Activated CD4-positive, alpha-beta T cell treated with anti-CD3 and anti-CD28 coated beads for 36 hours (primary cell): ENCODE measurements at regions of chr12 and their contacts with region 1.

Region 1: GRCh38 chr12:24902511-24903328 is 46.2 kb downstream of the BCAT1 start:
- DNase-seq: peak; percentile 63
- ATAC-seq: peak; percentile 28
- H3K4me3 Mint-ChIP-seq: peak overlapping the region; percentile 88
- H3K27ac Mint-ChIP-seq: peak overlapping the region; percentile 95
- H3K4me1 Mint-ChIP-seq: peaks cover 50% of the 10 kb centered on the region
- H3K27me3 Mint-ChIP-seq: peaks cover 28% of the 10 kb centered on the region

Region 2: GRCh38 chr12:24922090-24922489 is 19.4 kb after region 1 on chr12:
- CTCF ChIA-PET with region 1: interaction called, 4 read pairs
- POLR2A ChIA-PET with region 1: interaction called, 9 read pairs
- intact Hi-C with region 1: loop called (anchors 1 kb)
- DNase-seq: no peak
- ATAC-seq: peak; percentile 23
- H3K4me3 Mint-ChIP-seq: no peak overlapping the region
- H3K27ac Mint-ChIP-seq: peak overlapping the region; percentile 71
- H3K4me1 Mint-ChIP-seq: peaks cover 41% of the 10 kb centered on the region
- H3K27me3 Mint-ChIP-seq: peaks cover 6% of the 10 kb centered on the region

Region 3: GRCh38 chr12:24948757-24949722 is 46.3 kb after region 1 on chr12 and contains the start of gene BCAT1:
- CTCF ChIA-PET with region 1: interaction called, 8 read pairs
- POLR2A ChIA-PET with region 1: no interaction called
- intact Hi-C with region 1: loop called (anchors 2 kb)
- DNase-seq: peak; percentile 71
- ATAC-seq: peak; percentile 45
- H3K4me3 Mint-ChIP-seq: peak within 1 kb of the TSS; percentile 74
- H3K27ac Mint-ChIP-seq: peak within 1 kb of the TSS; percentile 91
- H3K4me1 Mint-ChIP-seq: peaks cover 57% of the 10 kb centered on the region
- H3K27me3 Mint-ChIP-seq: peaks cover 49% of the 10 kb centered on the region
- total RNA-seq, gene BCAT1: 27.9 to 40.0 TPM

Region 4: DNA sequence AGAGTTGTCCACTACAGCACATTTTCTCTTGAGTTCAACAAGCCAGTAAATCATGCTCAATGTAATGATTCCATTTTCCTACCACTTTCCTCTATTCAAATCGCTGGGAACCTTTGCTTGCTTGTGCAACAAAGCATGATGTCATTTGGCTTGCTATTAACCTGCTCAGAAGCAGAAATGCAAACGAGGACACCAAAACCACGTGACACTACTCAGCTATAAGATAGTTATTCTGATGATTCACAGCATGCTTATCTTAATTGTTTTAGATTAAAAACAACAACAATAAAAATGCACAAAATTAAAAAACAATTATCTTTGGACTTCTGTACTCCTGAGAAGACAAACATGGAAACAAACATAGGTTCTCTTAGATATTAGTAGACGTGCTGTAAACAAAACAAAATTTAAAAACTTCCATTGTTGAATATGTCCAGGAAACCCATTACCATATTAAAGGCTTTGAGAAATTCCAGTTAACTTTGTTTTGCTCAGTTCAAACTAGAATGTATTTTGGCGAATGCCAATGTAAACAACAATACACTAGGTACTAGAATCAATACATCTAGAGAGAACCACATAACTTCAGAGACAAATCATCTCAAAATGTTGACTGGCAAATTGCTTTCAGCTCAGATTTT is 425.5 kb after region 1 on chr12:
- CTCF ChIA-PET with region 1: no interaction called
- POLR2A ChIA-PET with region 1: no interaction called
- intact Hi-C with region 1: loop called in 1 of 2 experiments (anchors 5 kb)
- DNase-seq: no peak
- ATAC-seq: no peak
- H3K4me3 Mint-ChIP-seq: no peak overlapping the region
- H3K27ac Mint-ChIP-seq: no peak overlapping the region
- H3K4me1 Mint-ChIP-seq: peaks cover 23% of the 10 kb centered on the region
- H3K27me3 Mint-ChIP-seq: no peaks in the 10 kb centered on the region

Region 5: DNA sequence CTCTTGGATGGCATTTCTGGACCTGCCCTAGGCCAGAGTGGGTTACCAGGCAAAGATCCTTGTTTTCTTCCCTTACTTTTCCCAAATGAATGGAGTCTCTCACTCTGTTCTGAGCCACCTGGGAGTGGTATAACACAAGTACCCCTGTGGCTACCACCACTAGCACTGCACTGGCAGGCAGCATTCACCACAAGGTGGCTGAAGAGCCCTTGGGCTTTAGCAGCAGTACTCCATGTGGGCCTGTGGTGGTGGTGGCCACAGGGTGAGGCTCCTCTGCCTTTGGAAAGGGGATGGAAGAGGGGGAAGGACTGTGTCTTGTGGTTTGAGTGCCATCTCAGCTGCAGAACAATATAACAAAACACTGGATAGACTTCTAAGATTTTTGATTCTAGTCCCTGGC is 688.4 kb after region 1 on chr12:
- CTCF ChIA-PET with region 1: no interaction called
- POLR2A ChIA-PET with region 1: no interaction called
- intact Hi-C with region 1: loop called in 1 of 2 experiments (anchors 10 kb)
- DNase-seq: peak; percentile 9
- ATAC-seq: no peak
- H3K4me3 Mint-ChIP-seq: no peak overlapping the region
- H3K27ac Mint-ChIP-seq: peak overlapping the region; percentile 90
- H3K4me1 Mint-ChIP-seq: peaks cover 46% of the 10 kb centered on the region
- H3K27me3 Mint-ChIP-seq: no peaks in the 10 kb centered on the region